ENCODE measurements at regions of chr19 and their contacts with region 1.

Region 1: DNA sequence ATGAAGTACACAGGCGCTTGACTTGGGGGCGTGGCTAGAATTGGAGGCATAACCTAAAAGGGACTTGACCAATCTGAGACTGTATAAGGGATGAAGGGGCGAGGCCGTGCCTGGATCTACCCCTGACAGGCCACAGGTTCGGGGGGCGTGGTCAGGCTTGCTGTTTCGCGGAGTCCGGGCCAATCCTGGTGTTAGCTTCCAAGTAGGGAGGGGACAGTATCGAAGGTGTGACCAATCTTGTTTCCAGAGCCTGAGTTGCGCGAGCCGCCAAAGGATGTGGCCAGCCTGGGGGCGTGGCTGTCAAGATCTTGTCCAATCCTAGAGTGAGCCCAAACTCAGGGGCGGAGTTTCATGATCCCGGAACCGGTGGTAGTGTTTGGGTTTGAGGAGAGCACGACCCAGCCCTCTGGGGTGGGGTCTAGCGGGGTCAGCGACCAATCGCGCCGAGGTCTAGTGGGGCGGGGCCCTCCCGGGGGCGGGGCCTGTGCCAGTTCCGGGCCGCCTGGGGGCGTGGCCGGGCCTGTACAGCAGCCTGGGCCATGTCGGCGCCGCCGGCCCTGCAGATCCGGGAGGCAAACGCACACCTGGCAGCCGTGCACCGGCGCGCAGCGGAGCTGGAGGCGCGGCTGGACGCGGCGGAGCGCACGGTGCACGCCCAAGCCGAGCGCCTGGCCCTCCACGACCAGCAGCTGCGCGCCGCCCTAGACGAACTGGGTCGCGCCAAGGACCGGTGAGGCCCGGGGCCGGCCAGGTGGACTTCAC is at the start of gene VMAC:
- DNase-seq: peak; percentile 100
- ATAC-seq: peak; percentile 87
- total RNA-seq, gene VMAC: 1.6 TPM

Region 2: GRCh38 chr19:5452594-5453565 is 451.7 kb before region 1 on chr19:
- intact Hi-C with region 1: no loop called
- DNase-seq: peak; percentile 41
- ATAC-seq: no peak

Region 3: DNA sequence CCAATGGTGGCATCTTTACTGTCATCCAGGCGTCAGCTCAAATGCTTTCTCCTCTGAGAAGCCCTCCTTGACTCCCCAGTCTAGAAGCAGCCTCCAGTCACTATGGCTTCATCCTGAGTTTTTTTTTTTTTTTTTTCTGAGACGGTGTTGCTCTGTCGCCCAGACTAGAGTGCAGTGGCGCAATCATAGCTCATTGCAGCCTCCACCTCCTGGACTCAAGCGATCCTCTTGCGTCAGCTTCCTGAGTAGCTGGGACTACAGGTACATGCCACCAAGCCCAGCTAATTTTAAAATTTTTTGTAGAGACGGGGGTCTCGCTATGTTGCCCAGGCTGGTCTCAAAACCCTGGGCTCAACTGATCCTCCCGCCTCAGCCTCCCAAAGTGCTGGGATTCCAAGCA is 95.5 kb before region 1 on chr19:
- intact Hi-C with region 1: no loop called
- DNase-seq: no peak
- ATAC-seq: no peak

Region 4: GRCh38 chr19:5947435-5947834 is 42.9 kb after region 1 on chr19:
- intact Hi-C with region 1: loop called (anchors 5 kb)
- DNase-seq: peak; percentile 89
- ATAC-seq: peak; percentile 70

Region 5: DNA sequence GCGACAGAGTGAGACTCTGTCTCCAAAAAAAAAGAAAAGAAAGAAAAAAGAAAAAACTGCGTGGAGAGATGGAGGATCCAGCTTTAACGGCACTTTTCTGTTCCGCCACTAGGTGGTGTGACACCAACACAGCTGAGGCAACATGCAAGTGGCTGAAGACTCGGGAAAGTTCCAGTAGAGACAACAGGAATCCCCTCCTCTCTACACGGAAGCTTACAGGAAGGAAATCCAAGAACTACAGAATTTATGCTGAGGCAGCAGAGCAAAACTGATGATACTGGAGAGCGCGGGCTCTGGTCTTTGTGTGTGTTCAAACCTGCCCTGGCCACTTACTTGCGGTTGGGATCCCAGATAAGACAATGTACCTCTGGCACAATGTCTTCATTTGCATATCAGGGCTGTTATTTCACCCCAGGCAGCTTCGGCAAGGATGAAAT is 63.5 kb after region 1 on chr19:
- intact Hi-C with region 1: loop called (anchors 5 kb)
- DNase-seq: no peak
- ATAC-seq: peak; percentile 51

Region 6: GRCh38 chr19:6372594-6373095 is 468.1 kb after region 1 on chr19 and contains the start of gene ALKBH7:
- intact Hi-C with region 1: loop called (anchors 1 kb)
- DNase-seq: peak; percentile 98
- ATAC-seq: peak; percentile 92
- total RNA-seq, gene ALKBH7: 134 TPM

Measured in Right ventricle myocardium inferior (tissue), 1 donor.